Lower leg skin (tissue), 4 donors: ENCODE measurements at regions of chr1 and their contacts with region 1.

Region 1: DNA sequence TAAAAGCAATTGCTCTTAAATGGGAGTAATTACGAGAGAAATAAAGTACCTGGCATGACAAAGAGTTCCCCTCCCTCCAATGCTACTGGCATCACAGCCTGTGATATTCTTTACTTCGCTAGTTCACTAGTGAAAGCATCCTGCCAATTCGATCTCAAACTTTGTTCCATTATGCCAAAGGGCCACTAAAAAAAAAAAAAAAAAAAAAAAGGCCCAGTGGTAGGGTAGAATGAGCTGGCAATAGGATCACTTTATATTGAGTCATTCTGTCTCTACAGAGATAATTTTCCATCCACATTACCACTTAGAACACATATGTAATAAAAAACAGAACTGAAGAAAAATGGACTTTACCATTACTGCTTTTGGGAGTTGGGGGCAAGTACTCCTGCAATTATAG is 11.2 kb downstream of the PUM1 start:
- DNase-seq: no peak
- H3K4me3 ChIP-seq: no peak overlapping the region
- CTCF ChIP-seq: no peak
- POLR2A ChIP-seq: no peak

Region 2: DNA sequence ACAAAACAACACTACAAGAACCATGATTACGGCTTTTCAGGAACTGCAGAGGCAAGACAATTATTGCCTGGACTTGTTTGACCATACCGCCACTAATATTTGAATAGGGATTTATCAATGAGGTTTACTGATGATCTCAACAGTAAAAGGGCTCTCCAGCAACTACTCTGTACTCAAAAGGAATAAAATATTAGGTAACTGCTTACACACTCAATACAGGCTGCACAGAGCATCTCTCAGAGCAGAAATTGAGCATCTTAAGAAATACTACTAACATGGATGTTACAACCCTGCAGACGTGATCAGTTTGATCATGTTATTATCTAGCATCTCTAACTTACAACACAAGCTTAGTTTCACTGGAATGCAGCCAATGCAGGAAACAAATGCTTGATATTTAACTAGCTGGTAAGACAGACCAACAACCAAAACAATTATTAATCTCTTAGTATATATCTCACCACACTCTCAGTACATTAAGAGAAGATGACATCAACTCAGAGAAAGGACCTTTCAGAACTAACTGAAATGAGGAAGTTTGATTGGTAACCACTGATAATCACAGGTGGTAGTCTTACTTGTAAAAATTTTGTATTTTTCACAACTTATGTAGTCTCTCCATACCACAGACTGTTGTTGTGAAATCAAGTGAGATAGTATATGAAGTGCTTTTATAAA is 41.0 kb before region 1 on chr1:
- intact Hi-C with region 1: loop called (anchors 1 kb)
- DNase-seq: no peak
- H3K4me3 ChIP-seq: no peak overlapping the region
- CTCF ChIP-seq: no peak
- POLR2A ChIP-seq: no peak